ACHN (cell line): ENCODE measurements at regions of chr1 and their contacts with region 1.

Region 1: DNA sequence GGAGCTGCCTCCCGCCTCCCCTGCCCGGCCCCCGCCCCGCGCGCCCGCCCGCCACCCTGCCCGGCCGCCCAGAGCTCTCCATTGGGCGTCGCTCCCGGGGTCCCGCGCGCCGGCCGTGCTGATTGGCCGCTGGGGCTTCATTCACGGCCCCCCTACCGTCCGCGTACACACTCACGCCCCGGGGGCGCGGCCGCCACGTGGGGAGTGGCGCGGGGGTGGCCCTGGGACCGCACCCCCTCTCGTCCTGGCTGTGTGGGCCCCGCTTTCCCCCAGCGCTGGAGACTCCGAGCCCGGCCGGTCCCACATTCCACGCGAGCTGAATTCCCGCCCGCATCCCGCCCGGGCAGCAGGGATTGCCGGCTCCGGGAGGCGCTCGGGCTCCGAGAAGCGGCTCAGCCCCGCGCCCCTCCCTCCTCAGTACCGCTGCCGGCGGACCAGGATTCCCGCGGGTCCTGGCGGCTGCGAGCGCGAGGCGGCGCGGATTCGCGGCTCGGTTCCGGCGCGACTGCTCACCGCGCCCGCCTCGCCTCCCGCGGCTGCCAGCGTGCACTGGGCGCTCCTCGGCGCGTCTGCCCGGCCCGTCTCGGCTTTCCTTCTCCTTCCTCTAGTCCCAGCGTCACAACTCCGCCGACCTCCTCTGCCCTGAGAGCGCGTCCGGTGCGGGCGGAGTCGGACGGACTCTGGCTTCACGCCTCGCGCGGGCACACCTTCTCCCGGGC is 450 bp upstream of the POU3F1 start:
- DNase-seq: peak; percentile 80

Region 2: GRCh38 chr1:38152351-38153065 is 105.5 kb after region 1 on chr1:
- in situ Hi-C with region 1: no loop called
- DNase-seq: no peak

Region 3: DNA sequence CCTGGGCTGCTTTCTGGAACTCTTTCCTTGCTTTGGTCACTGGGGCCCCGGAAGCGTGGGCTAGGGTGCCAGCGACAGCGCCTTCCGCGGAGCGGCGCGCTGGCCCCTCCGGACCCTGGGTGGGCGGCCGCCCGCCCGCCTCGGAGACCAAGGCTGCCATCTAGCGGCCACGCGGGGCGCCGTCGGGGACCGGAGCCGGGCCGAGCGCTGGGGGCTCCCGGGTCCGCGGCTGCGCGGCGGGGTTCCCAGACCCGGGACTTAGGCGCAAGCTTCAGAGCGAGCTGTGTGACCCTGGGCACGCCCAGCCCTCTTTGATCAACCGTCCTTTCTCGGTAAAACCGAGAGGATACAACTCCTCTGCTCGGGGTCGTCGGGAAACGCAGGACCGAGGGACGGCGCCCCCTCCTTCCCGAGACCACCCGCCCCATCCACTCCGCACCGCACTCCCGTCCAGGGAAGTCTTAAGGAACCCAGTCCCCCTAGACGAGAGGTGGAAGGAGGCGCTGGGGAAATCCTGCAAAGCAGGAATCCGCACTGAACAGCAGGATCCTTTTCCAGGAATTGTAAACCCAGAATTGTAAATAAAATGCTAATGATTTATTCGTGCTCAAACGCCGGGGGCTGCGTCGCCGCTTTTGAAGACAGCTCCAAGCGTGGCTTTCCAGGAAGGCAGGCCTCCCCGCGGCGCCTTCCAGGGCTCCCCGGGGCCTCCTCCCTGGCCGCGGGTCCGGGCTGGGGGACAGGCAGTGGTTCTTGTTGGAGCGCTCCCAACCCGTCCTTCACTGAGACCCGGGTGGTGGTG is 771.3 kb after region 1 on chr1:
- in situ Hi-C with region 1: loop called (anchors 25 kb)
- DNase-seq: peak; percentile 17